Activated CD8-positive, alpha-beta T cell treated with anti-CD3 and anti-CD28 coated beads, Interleukin-2, amount 10 ng/mL, durations not matched to agents 7 days and 5 days (primary cell): ENCODE measurements at regions of chr10 and their contacts with region 1.

Region 1: GRCh38 chr10:11170993-11171851 is 153.6 kb downstream of the CELF2 start:
- DNase-seq: no peak
- ATAC-seq: peak; percentile 38
- H3K4me3 Mint-ChIP-seq: no peak overlapping the region
- H3K27ac Mint-ChIP-seq: no peak overlapping the region
- H3K4me1 Mint-ChIP-seq: peaks cover 40% of the 10 kb centered on the region
- H3K27me3 Mint-ChIP-seq: no peaks in the 10 kb centered on the region

Region 2: GRCh38 chr10:11080564-11080984 is 90.6 kb before region 1 on chr10:
- CTCF ChIA-PET with region 1: no interaction called
- POLR2A ChIA-PET with region 1: no interaction called
- DNase-seq: no peak
- ATAC-seq: no peak
- H3K4me3 Mint-ChIP-seq: no peak overlapping the region
- H3K27ac Mint-ChIP-seq: no peak overlapping the region
- H3K4me1 Mint-ChIP-seq: no peaks in the 10 kb centered on the region
- H3K27me3 Mint-ChIP-seq: peaks cover 24% of the 10 kb centered on the region

Region 3: GRCh38 chr10:11209830-11210181 is 38.6 kb after region 1 on chr10:
- CTCF ChIA-PET with region 1: interaction called, 5 read pairs
- POLR2A ChIA-PET with region 1: interaction called, 13 read pairs
- DNase-seq: no peak
- ATAC-seq: peak; percentile 14
- H3K4me3 Mint-ChIP-seq: peak overlapping the region; percentile 65
- H3K27ac Mint-ChIP-seq: peak overlapping the region; percentile 84
- H3K4me1 Mint-ChIP-seq: peaks cover 97% of the 10 kb centered on the region
- H3K27me3 Mint-ChIP-seq: no peaks in the 10 kb centered on the region

Region 4: GRCh38 chr10:11270135-11270857 is 99.1 kb after region 1 on chr10:
- CTCF ChIA-PET with region 1: interaction called, 14 read pairs
- POLR2A ChIA-PET with region 1: no interaction called
- DNase-seq: peak; percentile 69
- ATAC-seq: peak; percentile 79
- H3K4me3 Mint-ChIP-seq: no peak overlapping the region
- H3K27ac Mint-ChIP-seq: peak overlapping the region; percentile 53
- H3K4me1 Mint-ChIP-seq: peaks cover 40% of the 10 kb centered on the region
- H3K27me3 Mint-ChIP-seq: no peaks in the 10 kb centered on the region